ENCODE measurements at regions of chr17 and their contacts with region 1.

Region 1: GRCh38 chr17:76557368-76558197 is 17.7 kb downstream of the PRCD start:
- DNase-seq: peak; percentile 83 to 97 (median 94)
- ATAC-seq: peak; percentile 85 to 87
- H3K4me3 Mint-ChIP-seq: peak overlapping the region; percentile 97 to 99 (median 98)
- H3K27ac Mint-ChIP-seq: peak overlapping the region; percentile 94 to 100 (median 99)
- H3K4me1 Mint-ChIP-seq: peaks cover 26 to 72% (median 66%) of the 10 kb centered on the region in 4 donors
- H3K27me3 Mint-ChIP-seq: no peaks in the 10 kb centered on the region

Region 2: GRCh38 chr17:76444518-76445311 is 112.9 kb before region 1 on chr17:
- POLR2A ChIA-PET with region 1: no interaction called
- DNase-seq: no peak
- ATAC-seq: no peak
- H3K4me3 Mint-ChIP-seq: peak overlapping the region in 1 of 10 donors; percentile 7
- H3K27ac Mint-ChIP-seq: peak overlapping the region in 4 of 10 donors; percentile 2 to 49 (median 30)
- H3K4me1 Mint-ChIP-seq: peaks cover 38 to 90% (median 87%) of the 10 kb centered on the region in 4 donors
- H3K27me3 Mint-ChIP-seq: no peaks in the 10 kb centered on the region

Region 3: GRCh38 chr17:76506408-76507349 is 50.9 kb before region 1 on chr17:
- POLR2A ChIA-PET with region 1: interaction called, 14 read pairs
- DNase-seq: peak; percentile 80 to 98 (median 88)
- ATAC-seq: peak; percentile 83 to 85
- H3K4me3 Mint-ChIP-seq: no peak overlapping the region
- H3K27ac Mint-ChIP-seq: peak overlapping the region in 9 of 10 donors; percentile 48 to 83 (median 75)
- H3K4me1 Mint-ChIP-seq: peaks cover 7 to 43% (median 23%) of the 10 kb centered on the region in 4 donors
- H3K27me3 Mint-ChIP-seq: no peaks in the 10 kb centered on the region

Region 4: DNA sequence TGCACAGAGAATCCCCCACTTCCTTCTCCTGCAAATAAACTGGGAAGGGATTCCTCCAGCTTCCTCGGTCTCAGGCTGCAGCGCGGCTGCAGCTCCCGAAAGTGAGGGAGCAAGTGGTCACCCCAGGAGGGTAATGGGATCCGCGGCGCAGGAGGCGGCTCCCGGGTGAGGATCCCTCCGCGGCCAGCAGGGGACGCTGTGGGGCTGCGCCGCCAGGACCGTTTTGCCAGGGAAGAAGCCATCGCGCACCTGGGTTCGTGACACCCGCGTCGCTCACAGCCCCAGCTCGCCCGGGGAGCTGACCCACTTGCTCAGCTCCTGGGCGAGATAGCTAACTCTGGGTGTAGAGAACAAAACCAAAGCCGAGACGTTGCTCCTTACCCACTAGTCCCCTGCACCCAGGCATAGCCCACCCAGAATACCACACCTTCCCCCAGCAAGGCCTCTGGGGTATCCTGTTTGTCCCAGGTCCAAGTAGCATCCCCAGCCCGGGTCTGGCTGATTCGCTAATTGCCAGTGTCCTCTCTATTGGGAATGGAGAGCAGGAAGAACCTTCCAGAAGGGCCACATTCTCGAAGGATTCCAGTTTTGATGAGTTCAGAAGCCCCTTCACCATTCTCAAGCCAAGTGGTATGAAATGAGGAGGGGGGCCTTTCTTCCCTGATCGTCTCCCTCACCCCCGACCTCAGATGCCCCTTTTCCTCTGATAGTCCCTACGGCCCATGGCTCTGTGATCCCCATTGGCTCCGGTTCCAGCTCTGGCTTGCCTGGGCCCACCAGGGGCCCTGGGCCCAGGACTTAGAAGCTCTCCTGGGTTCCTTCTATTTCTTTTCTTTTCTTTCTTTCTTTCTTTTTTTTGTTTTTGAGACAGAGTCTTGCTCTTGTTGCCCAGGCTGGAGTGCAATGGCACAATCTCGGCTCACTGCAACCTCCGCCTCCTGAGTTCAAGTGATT is 34.2 kb before region 1 on chr17:
- POLR2A ChIA-PET with region 1: interaction called, 26 read pairs
- DNase-seq: peak; percentile 63 to 88 (median 80)
- ATAC-seq: peak; percentile 59 to 75
- H3K4me3 Mint-ChIP-seq: peak overlapping the region in 9 of 10 donors; percentile 31 to 81 (median 61)
- H3K27ac Mint-ChIP-seq: peak overlapping the region; percentile 58 to 96 (median 89)
- H3K4me1 Mint-ChIP-seq: peaks cover 29 to 51% (median 37%) of the 10 kb centered on the region in 4 donors
- H3K27me3 Mint-ChIP-seq: no peaks in the 10 kb centered on the region

Region 5: DNA sequence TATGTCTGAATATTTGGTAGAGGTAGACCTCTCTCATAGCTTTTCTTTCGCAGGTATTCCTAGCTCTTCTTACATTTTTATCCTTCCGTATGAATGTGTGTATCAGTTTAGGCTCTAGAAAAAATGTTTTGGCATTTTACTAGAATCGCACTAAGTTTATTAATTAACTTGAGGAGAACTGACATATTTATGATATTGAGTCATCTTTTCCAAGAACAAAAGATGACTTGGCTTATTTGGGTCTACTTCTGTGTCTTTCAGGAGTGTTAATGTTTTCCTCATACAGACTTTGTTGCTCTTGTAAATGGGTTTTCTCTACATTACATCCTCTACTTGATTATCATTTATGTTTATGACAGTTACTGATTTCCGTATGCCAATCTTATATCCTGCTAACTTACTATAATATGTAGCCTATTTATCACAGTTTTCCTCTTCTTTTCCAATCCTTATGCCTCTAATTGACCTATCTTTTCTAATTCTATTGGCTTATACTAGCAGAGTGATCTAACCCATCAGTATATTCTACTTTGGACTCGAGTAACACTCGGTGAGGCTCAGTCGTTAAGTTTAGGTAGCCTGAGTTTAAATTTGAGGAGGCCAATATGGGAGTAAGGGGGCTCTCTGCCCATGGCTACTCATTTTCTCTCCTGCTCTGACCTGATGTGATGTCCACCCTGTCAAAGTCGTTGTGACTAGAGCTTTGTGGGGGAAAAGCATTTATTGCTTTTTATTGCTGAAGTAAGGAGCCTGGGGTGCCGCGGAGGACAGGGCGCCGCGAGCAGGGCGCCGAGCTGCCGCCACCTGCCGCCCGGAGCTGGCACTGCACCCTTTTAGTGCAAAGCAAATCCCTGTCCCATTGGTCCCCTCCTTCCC is 65.9 kb after region 1 on chr17:
- POLR2A ChIA-PET with region 1: interaction called, 12 read pairs
- DNase-seq: peak; percentile 55 to 82 (median 73)
- ATAC-seq: peak; percentile 98 to 99
- H3K4me3 Mint-ChIP-seq: no peak overlapping the region
- H3K27ac Mint-ChIP-seq: peak overlapping the region in 1 of 10 donors; percentile 44
- H3K4me1 Mint-ChIP-seq: peaks cover 4 to 7% (median 5%) of the 10 kb centered on the region in 4 donors
- H3K27me3 Mint-ChIP-seq: peaks cover 0 to 7% (median 3%) of the 10 kb centered on the region in 5 donors

Region 6: GRCh38 chr17:76681222-76682137 is 123.9 kb after region 1 on chr17:
- POLR2A ChIA-PET with region 1: interaction called, 15 read pairs
- DNase-seq: peak; percentile 61 to 88 (median 75)
- ATAC-seq: peak; percentile 76 to 80
- H3K4me3 Mint-ChIP-seq: peak overlapping the region in 3 of 10 donors; percentile 2 to 78 (median 75)
- H3K27ac Mint-ChIP-seq: peak overlapping the region in 6 of 10 donors; percentile 16 to 86 (median 73)
- H3K4me1 Mint-ChIP-seq: peaks cover 5 to 15% (median 11%) of the 10 kb centered on the region in 4 donors
- H3K27me3 Mint-ChIP-seq: no peaks in the 10 kb centered on the region

Measured in naive thymus-derived CD8-positive, alpha-beta T cell (primary cell).